MCF 10A (cell line): ENCODE measurements at regions of chr9 and their contacts with region 1.

Region 1: GRCh38 chr9:94783102-94783664 is 56.7 kb downstream of the AOPEP start:
- DNase-seq: peak; percentile 100
- H3K4me3 Mint-ChIP-seq: no peak overlapping the region
- H3K27ac Mint-ChIP-seq: no peak overlapping the region
- H3K4me1 Mint-ChIP-seq: peaks cover 23% of the 10 kb centered on the region
- H3K27me3 Mint-ChIP-seq: no peaks in the 10 kb centered on the region
- CTCF ChIP-seq: peak; percentile 70

Region 2: DNA sequence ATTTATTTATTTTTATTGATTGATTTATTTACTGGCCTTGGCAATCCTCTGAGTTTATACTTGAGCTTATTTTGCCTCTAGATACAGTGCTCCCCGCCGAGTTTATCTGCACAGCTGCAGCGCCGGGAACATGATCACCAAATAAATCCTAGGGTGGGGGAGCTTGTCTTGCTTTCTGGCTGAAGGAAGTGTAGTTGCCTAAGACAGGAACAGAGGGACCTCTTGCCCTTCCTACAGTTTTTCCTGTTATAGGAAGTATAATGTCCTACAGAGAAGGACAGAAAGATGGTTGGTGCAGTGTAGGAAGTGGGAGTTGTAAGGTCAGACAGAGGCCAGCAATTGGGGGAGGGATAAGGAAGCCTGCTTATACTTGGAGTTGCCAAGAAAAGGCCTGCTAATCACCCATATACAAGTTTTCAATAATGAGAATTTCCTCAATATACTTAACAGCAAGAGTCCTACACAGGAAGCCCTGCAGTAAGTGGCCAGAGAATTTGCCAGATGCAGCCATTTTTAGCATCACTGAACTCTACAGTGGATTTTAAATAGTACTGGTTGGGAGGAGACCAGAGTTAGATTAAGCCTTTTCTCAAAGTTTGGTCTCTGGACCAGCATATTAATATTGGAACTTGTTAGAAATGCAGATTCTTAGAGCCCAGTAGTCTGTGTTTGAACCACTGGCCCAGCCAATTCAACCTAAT is 49.0 kb before region 1 on chr9:
- CTCF ChIA-PET with region 1: no interaction called
- POLR2A ChIA-PET with region 1: no interaction called
- intact Hi-C with region 1: no loop called
- DNase-seq: no peak
- H3K4me3 Mint-ChIP-seq: no peak overlapping the region
- H3K27ac Mint-ChIP-seq: no peak overlapping the region
- H3K4me1 Mint-ChIP-seq: peaks cover 5% of the 10 kb centered on the region
- H3K27me3 Mint-ChIP-seq: no peaks in the 10 kb centered on the region
- CTCF ChIP-seq: no peak

Region 3: DNA sequence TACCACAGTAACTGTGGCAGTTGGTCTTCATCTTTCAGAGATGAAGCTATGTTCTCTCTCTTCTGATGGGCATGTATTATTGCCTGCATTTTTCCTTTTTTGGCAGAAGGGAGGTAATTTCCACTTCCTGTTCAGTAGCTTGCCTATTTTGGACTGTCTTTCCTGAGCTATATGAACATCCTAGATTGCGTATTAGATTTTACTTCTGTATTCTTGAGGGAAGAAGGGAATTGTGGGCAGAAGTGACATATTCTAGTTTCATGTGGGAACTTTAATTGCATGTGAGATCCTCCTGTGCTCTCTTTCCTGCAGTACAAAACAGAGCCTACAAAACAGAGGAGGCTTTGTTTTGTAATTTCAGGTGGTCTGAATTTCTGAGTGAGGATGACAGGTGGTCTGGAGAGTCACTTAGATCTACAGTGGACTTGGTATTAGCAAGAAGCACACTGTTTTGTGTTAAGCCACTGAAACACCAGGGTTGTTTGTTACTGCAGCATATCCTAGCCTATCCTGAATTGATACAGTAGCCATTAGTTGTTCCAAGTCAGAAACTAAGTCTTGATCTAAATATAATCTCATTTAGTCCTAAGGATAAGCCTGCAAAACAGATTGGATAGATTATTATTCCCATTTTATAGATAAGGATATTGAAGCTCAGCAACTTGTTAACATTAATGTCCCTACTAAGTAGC is 11.4 kb after region 1 on chr9:
- CTCF ChIA-PET with region 1: interaction called, 5 read pairs
- POLR2A ChIA-PET with region 1: interaction called, 157 read pairs
- intact Hi-C with region 1: no loop called
- DNase-seq: no peak
- H3K4me3 Mint-ChIP-seq: no peak overlapping the region
- H3K27ac Mint-ChIP-seq: no peak overlapping the region
- H3K4me1 Mint-ChIP-seq: peaks cover 8% of the 10 kb centered on the region
- H3K27me3 Mint-ChIP-seq: no peaks in the 10 kb centered on the region
- CTCF ChIP-seq: no peak

Region 4: GRCh38 chr9:94922098-94922607 is 139.0 kb after region 1 on chr9:
- CTCF ChIA-PET with region 1: interaction called, 6 read pairs
- POLR2A ChIA-PET with region 1: interaction called, 12 read pairs
- intact Hi-C with region 1: no loop called
- DNase-seq: peak; percentile 82
- H3K4me3 Mint-ChIP-seq: peak overlapping the region; percentile 43
- H3K27ac Mint-ChIP-seq: peak overlapping the region; percentile 85
- H3K4me1 Mint-ChIP-seq: peaks cover 75% of the 10 kb centered on the region
- H3K27me3 Mint-ChIP-seq: no peaks in the 10 kb centered on the region
- CTCF ChIP-seq: no peak

Region 5: GRCh38 chr9:95004411-95005277 is 221.5 kb after region 1 on chr9:
- CTCF ChIA-PET with region 1: interaction called, 25 read pairs
- POLR2A ChIA-PET with region 1: interaction called, 81 read pairs
- intact Hi-C with region 1: loop called (anchors 1 kb)
- DNase-seq: peak; percentile 51
- H3K4me3 Mint-ChIP-seq: peak overlapping the region; percentile 85
- H3K27ac Mint-ChIP-seq: peak overlapping the region; percentile 97
- H3K4me1 Mint-ChIP-seq: peaks cover 35% of the 10 kb centered on the region
- H3K27me3 Mint-ChIP-seq: no peaks in the 10 kb centered on the region
- CTCF ChIP-seq: no peak

Region 6: GRCh38 chr9:95048225-95049087 is 265.3 kb after region 1 on chr9:
- CTCF ChIA-PET with region 1: interaction called, 7 read pairs
- POLR2A ChIA-PET with region 1: interaction called, 24 read pairs
- intact Hi-C with region 1: no loop called
- DNase-seq: peak; percentile 85
- H3K4me3 Mint-ChIP-seq: peak overlapping the region; percentile 78
- H3K27ac Mint-ChIP-seq: peak overlapping the region; percentile 76
- H3K4me1 Mint-ChIP-seq: peaks cover 16% of the 10 kb centered on the region
- H3K27me3 Mint-ChIP-seq: no peaks in the 10 kb centered on the region
- CTCF ChIP-seq: no peak

Region 7: GRCh38 chr9:95249986-95250385 is 466.8 kb after region 1 on chr9:
- CTCF ChIA-PET with region 1: no interaction called
- POLR2A ChIA-PET with region 1: no interaction called
- intact Hi-C with region 1: no loop called
- DNase-seq: no peak
- H3K4me3 Mint-ChIP-seq: no peak overlapping the region
- H3K27ac Mint-ChIP-seq: no peak overlapping the region
- H3K4me1 Mint-ChIP-seq: peaks cover 10% of the 10 kb centered on the region
- H3K27me3 Mint-ChIP-seq: no peaks in the 10 kb centered on the region
- CTCF ChIP-seq: no peak